GM12878 (cell line): ENCODE measurements at regions of chr20 and their contacts with region 1.

Region 1: DNA sequence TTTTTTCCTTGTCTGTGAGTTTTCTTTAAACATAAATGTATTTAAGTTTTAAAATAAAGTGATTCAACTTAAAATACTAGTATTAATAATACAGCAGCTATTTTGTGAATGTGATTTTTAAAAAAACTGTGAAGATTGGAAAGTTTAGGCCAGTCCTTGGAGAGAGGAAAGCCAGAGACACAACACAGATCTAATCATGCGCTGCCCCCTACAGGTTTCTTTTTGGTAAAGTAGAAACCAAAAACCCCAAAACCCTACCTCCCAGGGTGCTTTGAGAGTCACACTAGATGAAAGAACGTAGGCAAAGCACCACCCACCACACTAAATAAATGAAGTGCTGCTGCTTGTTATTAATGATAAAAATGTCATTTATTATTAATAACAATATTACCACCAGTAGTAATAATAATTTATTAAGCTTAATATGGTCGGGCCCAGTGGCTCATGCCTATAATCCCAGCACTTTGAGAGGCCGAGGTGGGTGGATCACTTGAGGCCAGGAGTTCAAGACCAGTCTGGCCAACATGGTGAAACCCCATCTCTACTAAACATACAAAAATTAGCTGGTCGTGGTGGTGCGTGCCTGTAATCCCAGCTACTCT is 33.7 kb downstream of the SLC9A8 start:
- DNase-seq: no peak
- ATAC-seq: peak; percentile 96
- H3K4me3 ChIP-seq: no peak overlapping the region
- H3K27ac ChIP-seq: no peak overlapping the region
- H3K4me1 ChIP-seq: peaks cover 4% of the 10 kb centered on the region; the same call in 1 of the 2 replicates
- H3K27me3 ChIP-seq: no peaks in the 10 kb centered on the region
- CTCF ChIP-seq: peak; percentile 51 to 77 (median 60)
- EP300 ChIP-seq: no peak
- POLR2A ChIP-seq: no peak
- RAD21 ChIP-seq: peak; percentile 86

Region 2: DNA sequence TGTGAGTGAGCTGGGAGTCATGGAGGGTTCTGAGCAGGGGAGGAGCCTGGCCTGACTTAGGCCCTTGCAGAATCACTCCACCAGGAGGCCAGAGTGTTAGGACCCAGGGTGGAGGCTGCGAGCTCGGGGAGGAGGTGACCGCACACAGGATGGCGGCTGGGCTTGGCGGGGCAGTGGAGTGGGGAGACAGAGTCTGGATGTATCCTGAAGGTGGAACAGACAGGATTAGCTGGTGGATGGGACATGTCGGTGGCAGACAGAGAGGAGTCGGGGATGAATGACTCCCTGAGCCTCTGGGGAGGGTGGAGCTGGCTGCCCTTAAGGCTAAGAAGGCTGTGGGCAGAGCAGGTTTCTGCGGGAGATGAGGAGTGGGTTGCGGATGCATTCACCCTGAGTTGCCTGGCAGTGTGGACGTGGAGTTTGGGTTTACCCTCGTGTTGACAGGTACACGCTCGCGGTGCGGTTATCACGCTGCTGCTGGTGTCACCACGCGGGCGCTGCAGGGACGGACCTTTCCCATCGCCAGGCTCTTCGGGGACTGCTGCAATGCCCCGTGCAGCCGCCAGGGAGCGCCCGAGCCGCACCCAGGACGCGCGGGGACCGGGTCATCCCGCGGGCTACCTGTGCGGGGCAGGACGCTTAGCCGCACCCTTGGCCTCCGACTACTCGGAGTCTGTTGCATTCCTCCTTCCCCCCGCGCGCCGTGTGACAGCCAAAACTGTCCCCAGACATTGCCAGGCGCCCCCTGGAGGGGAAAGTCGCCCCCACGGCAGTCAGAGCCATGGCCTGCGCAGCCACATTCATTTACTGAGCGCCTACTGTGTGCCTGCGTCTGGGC is 235.4 kb before region 1 on chr20:
- CTCF ChIA-PET with region 1: interaction called, 226 read pairs
- POLR2A ChIA-PET with region 1: interaction called, 4 read pairs
- RAD21 ChIA-PET with region 1: interaction called, 110 read pairs
- SMC1A ChIA-PET with region 1: interaction called, 65 read pairs
- in situ Hi-C with region 1: loop called (anchors 5 kb)
- intact Hi-C with region 1: loop called (anchors 1 kb)
- DNase-seq: no peak
- ATAC-seq: peak; percentile 87
- H3K4me3 ChIP-seq: peak overlapping the region; percentile 46; the same call in 1 of the 2 replicates
- H3K27ac ChIP-seq: no peak overlapping the region
- H3K4me1 ChIP-seq: peaks cover 11% of the 10 kb centered on the region
- H3K27me3 ChIP-seq: no peaks in the 10 kb centered on the region
- CTCF ChIP-seq: peak; percentile 97 to 99 (median 99)
- EP300 ChIP-seq: no peak
- POLR2A ChIP-seq: no peak
- RAD21 ChIP-seq: peak; percentile 94

Region 3: GRCh38 chr20:49657118-49657901 is 189.0 kb before region 1 on chr20:
- CTCF ChIA-PET with region 1: interaction called, 11 read pairs
- POLR2A ChIA-PET with region 1: interaction called, 4 read pairs
- RAD21 ChIA-PET with region 1: interaction called, 4 read pairs
- SMC1A ChIA-PET with region 1: interaction called, 8 read pairs
- in situ Hi-C with region 1: no loop called
- intact Hi-C with region 1: no loop called
- DNase-seq: no peak
- ATAC-seq: no peak
- H3K4me3 ChIP-seq: no peak overlapping the region
- H3K27ac ChIP-seq: peak overlapping the region; percentile 6; the same call in 1 of the 2 replicates
- H3K4me1 ChIP-seq: peaks cover 37% of the 10 kb centered on the region
- H3K27me3 ChIP-seq: no peaks in the 10 kb centered on the region
- CTCF ChIP-seq: no peak
- EP300 ChIP-seq: no peak
- POLR2A ChIP-seq: no peak
- RAD21 ChIP-seq: no peak

Region 4: DNA sequence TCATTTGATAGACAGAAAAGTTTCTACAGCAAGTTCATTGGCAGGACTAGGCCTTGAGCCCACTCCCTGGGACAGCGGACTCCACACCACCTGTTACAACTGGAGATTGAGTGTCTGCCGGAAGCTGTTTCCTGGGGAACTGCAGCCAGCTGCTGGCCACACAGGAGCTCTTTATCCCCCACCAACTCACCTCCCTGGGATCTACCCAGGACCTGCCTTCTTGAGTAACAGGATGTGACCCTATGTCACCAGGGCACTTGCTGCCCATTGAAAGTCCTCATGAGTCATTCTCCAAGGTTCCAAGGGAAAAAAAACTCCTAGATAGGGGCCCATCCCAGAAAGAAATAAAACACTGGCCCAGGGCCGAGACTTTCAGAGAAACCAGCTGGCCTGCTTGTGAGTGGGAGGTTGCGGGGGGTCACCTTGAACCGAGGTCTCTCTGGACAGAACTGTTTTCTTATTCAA is 71.0 kb before region 1 on chr20:
- CTCF ChIA-PET with region 1: interaction called, 10 read pairs
- POLR2A ChIA-PET with region 1: no interaction called
- RAD21 ChIA-PET with region 1: no interaction called
- SMC1A ChIA-PET with region 1: no interaction called
- in situ Hi-C with region 1: no loop called
- intact Hi-C with region 1: no loop called
- DNase-seq: no peak
- ATAC-seq: no peak
- H3K4me3 ChIP-seq: no peak overlapping the region
- H3K27ac ChIP-seq: no peak overlapping the region
- H3K4me1 ChIP-seq: peaks cover 11% of the 10 kb centered on the region; the same call in 1 of the 2 replicates
- H3K27me3 ChIP-seq: no peaks in the 10 kb centered on the region
- CTCF ChIP-seq: no peak
- EP300 ChIP-seq: no peak
- POLR2A ChIP-seq: no peak
- RAD21 ChIP-seq: no peak

Region 5: DNA sequence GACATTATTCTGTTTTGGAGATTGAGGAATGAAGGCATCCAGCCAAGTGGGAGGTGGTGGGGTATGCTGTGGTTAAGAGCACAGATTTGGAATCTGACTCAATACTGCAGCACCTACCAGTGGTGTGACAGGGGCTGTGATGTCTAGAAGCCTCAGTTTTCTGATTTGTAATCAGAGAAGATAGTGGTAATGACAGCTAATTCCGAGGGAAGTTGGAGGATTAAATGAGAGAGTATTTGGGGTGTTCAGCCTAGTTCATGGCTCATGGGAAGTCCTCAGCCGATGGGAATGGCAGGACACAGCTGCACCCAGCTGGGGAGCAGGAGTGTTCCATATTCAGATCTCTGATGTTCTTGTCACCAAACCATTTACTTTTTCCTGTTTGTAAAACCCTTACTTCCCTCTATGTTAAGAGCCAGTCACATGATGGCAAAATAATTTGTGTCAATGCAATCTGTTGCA is 24.4 kb before region 1 on chr20:
- CTCF ChIA-PET with region 1: interaction called, 27 read pairs
- POLR2A ChIA-PET with region 1: no interaction called
- RAD21 ChIA-PET with region 1: interaction called, 8 read pairs
- SMC1A ChIA-PET with region 1: interaction called, 7 read pairs
- in situ Hi-C with region 1: no loop called
- intact Hi-C with region 1: no loop called
- DNase-seq: no peak
- ATAC-seq: peak; percentile 68
- H3K4me3 ChIP-seq: no peak overlapping the region
- H3K27ac ChIP-seq: 0 out of 2 replicates have a peak overlapping the region, but pooled peaks have one; percentile 14
- H3K4me1 ChIP-seq: peaks cover 22% of the 10 kb centered on the region
- H3K27me3 ChIP-seq: no peaks in the 10 kb centered on the region
- CTCF ChIP-seq: peak; percentile 34 to 55 (median 39); a peak in 5 of 6 replicates
- EP300 ChIP-seq: 0 out of 4 replicates have a peak, but pooled peaks of 1 of the 2 experiments have one; percentile 18
- POLR2A ChIP-seq: no peak
- RAD21 ChIP-seq: peak; percentile 61

Region 6: GRCh38 chr20:49888345-49888966 is 42.1 kb after region 1 on chr20:
- CTCF ChIA-PET with region 1: interaction called, 14 read pairs
- POLR2A ChIA-PET with region 1: no interaction called
- RAD21 ChIA-PET with region 1: interaction called, 17 read pairs
- SMC1A ChIA-PET with region 1: interaction called, 4 read pairs
- in situ Hi-C with region 1: no loop called
- intact Hi-C with region 1: no loop called
- DNase-seq: peak; percentile 9
- ATAC-seq: peak; percentile 88
- H3K4me3 ChIP-seq: no peak overlapping the region
- H3K27ac ChIP-seq: no peak overlapping the region
- H3K4me1 ChIP-seq: peaks cover 13% of the 10 kb centered on the region
- H3K27me3 ChIP-seq: no peaks in the 10 kb centered on the region
- CTCF ChIP-seq: peak; percentile 81 to 85 (median 84)
- EP300 ChIP-seq: no peak
- POLR2A ChIP-seq: no peak
- RAD21 ChIP-seq: peak; percentile 89